Upper lobe of right lung (tissue), 1 donor: ENCODE measurements at regions of chr6 and their contacts with region 1.

Region 1: GRCh38 chr6:75296811-75297779 is 12.5 kb upstream of the TMEM30A start:
- DNase-seq: no peak
- ATAC-seq: peak; percentile 72
- H3K4me3 ChIP-seq: no peak overlapping the region
- H3K27ac ChIP-seq: no peak overlapping the region
- H3K4me1 ChIP-seq: peaks cover 18% of the 10 kb centered on the region
- H3K27me3 ChIP-seq: no peaks in the 10 kb centered on the region
- CTCF ChIP-seq: peak; percentile 78

Region 2: GRCh38 chr6:75167325-75167724 is 129.8 kb before region 1 on chr6:
- intact Hi-C with region 1: no loop called
- DNase-seq: no peak
- ATAC-seq: no peak
- H3K4me3 ChIP-seq: no peak overlapping the region
- H3K27ac ChIP-seq: no peak overlapping the region
- H3K4me1 ChIP-seq: no peaks in the 10 kb centered on the region
- H3K27me3 ChIP-seq: no peaks in the 10 kb centered on the region
- CTCF ChIP-seq: no peak

Region 3: GRCh38 chr6:75386053-75386770 is 89.1 kb after region 1 on chr6:
- intact Hi-C with region 1: no loop called
- DNase-seq: no peak
- ATAC-seq: no peak
- H3K4me3 ChIP-seq: no peak overlapping the region
- H3K27ac ChIP-seq: no peak overlapping the region
- H3K4me1 ChIP-seq: no peaks in the 10 kb centered on the region
- H3K27me3 ChIP-seq: no peaks in the 10 kb centered on the region
- CTCF ChIP-seq: no peak

Region 4: DNA sequence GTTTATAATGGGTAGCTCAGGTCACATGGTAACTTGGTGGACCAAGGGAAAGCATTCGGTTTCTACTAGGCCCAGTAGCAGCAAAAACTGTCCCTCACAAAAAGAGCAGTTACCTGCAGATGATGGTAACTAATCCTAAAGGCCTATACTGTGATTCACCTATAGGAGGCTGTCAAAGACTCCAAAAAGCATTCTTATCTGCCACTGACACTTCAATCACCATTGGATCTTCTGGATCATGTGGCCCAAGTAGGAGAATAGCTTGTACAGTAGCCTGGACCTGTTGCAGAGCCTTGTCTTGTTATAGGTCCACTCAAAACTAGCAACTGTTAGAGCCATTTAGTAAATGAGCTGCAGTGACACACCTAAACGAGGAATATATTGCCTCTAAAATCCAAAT is 219.7 kb after region 1 on chr6:
- intact Hi-C with region 1: loop called (anchors 10 kb)
- DNase-seq: no peak
- ATAC-seq: no peak
- H3K4me3 ChIP-seq: no peak overlapping the region
- H3K27ac ChIP-seq: no peak overlapping the region
- H3K4me1 ChIP-seq: no peaks in the 10 kb centered on the region
- H3K27me3 ChIP-seq: no peaks in the 10 kb centered on the region
- CTCF ChIP-seq: no peak